GM10248 (cell line): ENCODE measurements at regions of chr18 and their contacts with region 1.

Region 1: DNA sequence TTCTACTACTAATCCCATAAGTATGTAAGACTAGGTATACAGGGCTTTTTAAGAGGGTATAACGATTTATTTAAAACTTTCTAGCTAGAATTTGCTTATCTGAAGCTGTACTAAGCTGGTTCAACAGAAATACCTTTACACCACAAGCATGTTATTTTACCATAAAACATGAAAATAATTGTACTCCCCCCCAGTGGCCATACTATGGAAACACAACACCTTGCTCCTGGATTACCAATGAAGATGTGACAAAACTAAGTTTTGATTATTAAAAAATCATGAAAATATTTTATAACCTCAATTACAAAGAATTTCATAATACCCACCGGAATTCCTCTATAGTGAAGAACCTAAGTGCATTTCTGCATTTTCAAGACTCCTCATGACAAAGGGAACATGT is 27.3 kb downstream of the LPIN2 start:
- DNase-seq: peak; percentile 44
- CTCF ChIP-seq: peak; percentile 51

Region 2: GRCh38 chr18:2932247-2933181 is 53.1 kb before region 1 on chr18:
- CTCF ChIA-PET with region 1: interaction called, 17 read pairs
- POLR2A ChIA-PET with region 1: no interaction called
- DNase-seq: peak; percentile 74
- CTCF ChIP-seq: peak; percentile 54

Region 3: GRCh38 chr18:2958819-2959298 is 26.8 kb before region 1 on chr18:
- CTCF ChIA-PET with region 1: interaction called, 20 read pairs
- POLR2A ChIA-PET with region 1: interaction called, 4 read pairs
- DNase-seq: peak; percentile 46
- CTCF ChIP-seq: no peak